PC-3 (cell line): ENCODE measurements at regions of chr11 and their contacts with region 1.

Region 1: GRCh38 chr11:112588252-112588694 is 327.6 kb upstream of the PLET1 start:
- DNase-seq: peak; percentile 90
- ATAC-seq: peak; percentile 94
- H3K4me3 ChIP-seq: no peak overlapping the region
- H3K27ac ChIP-seq: no peak overlapping the region
- H3K4me1 ChIP-seq: no peaks in the 10 kb centered on the region
- H3K27me3 ChIP-seq: peaks cover 8% of the 10 kb centered on the region; the same call in 1 of the 2 replicates
- CTCF ChIP-seq: peak; percentile 87

Region 2: GRCh38 chr11:112310419-112310818 is 277.9 kb before region 1 on chr11:
- CTCF ChIA-PET with region 1: no interaction called
- POLR2A ChIA-PET with region 1: no interaction called
- intact Hi-C with region 1: no loop called
- DNase-seq: peak; percentile 90
- ATAC-seq: peak; percentile 46
- H3K4me3 ChIP-seq: no peak overlapping the region
- H3K27ac ChIP-seq: peak overlapping the region; percentile 62
- H3K4me1 ChIP-seq: peaks cover 15% of the 10 kb centered on the region
- H3K27me3 ChIP-seq: no peaks in the 10 kb centered on the region
- CTCF ChIP-seq: no peak

Region 3: DNA sequence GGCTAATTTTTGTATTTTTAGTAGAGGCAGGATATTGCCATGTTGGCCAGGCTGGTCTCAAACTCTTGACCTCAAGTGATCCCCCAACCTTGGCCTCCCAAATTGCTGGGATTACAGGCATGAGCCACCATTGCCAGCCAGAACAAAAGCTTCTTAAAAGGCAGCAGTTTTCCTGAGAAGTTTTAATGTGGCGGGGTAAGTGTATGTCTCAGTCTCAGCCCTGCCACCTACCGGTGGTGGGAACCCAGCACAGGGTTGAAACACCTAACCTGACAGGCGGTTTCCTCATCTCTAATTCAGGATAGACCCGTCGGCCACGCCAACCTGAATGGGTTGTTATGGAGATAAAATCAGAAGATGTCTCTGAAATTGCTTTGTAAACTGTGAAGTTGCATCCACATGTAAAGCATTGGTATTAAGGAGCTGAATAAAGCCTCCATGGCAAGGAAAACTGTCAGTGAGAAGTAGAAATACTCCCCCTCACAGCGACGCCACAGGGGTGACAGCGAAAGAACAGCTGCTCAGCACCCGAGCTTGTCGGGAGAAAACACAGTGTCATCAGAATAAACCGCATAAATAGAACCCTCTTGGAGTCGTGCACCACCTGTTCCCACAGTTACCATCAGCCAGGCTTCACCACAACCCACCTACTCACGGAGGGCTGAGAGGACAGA is 207.0 kb after region 1 on chr11:
- CTCF ChIA-PET with region 1: interaction called, 3 read pairs
- POLR2A ChIA-PET with region 1: no interaction called
- intact Hi-C with region 1: loop called (anchors 1 kb)
- DNase-seq: peak; percentile 70
- ATAC-seq: peak; percentile 73
- H3K4me3 ChIP-seq: no peak overlapping the region
- H3K27ac ChIP-seq: no peak overlapping the region
- H3K4me1 ChIP-seq: no peaks in the 10 kb centered on the region
- H3K27me3 ChIP-seq: peaks cover 16% of the 10 kb centered on the region
- CTCF ChIP-seq: peak; percentile 82